Psoas muscle (tissue), 8 donors: ENCODE measurements at regions of chr5 and their contacts with region 1.

Region 1: GRCh38 chr5:53481887-53482716 is 1.7 kb downstream of the FST start:
- DNase-seq: peak; percentile 85 to 88
- ATAC-seq: peak; percentile 77 to 87 (median 82)
- H3K4me3 ChIP-seq: peak overlapping the region; percentile 71
- H3K27ac ChIP-seq: no peak overlapping the region
- H3K4me1 ChIP-seq: no peaks in the 10 kb centered on the region
- H3K27me3 ChIP-seq: peaks cover 0 to 18% (median 4%) of the 10 kb centered on the region in 3 donors
- CTCF ChIP-seq: peak; percentile 43

Region 2: GRCh38 chr5:53041071-53041692 is 440.9 kb before region 1 on chr5:
- intact Hi-C with region 1: no loop called
- DNase-seq: no peak
- ATAC-seq: no peak
- H3K4me3 ChIP-seq: no peak overlapping the region
- H3K27ac ChIP-seq: no peak overlapping the region
- H3K4me1 ChIP-seq: no peaks in the 10 kb centered on the region
- H3K27me3 ChIP-seq: no peaks in the 10 kb centered on the region
- CTCF ChIP-seq: no peak

Region 3: GRCh38 chr5:53469946-53470687 is 12.0 kb before region 1 on chr5:
- intact Hi-C with region 1: no loop called
- DNase-seq: no peak
- ATAC-seq: no peak
- H3K4me3 ChIP-seq: no peak overlapping the region
- H3K27ac ChIP-seq: no peak overlapping the region
- H3K4me1 ChIP-seq: no peaks in the 10 kb centered on the region
- H3K27me3 ChIP-seq: no peaks in the 10 kb centered on the region
- CTCF ChIP-seq: no peak

Region 4: GRCh38 chr5:53503562-53504218 is 21.6 kb after region 1 on chr5:
- intact Hi-C with region 1: no loop called
- DNase-seq: no peak
- ATAC-seq: peak in 1 of 4 donors; percentile 19
- H3K4me3 ChIP-seq: no peak overlapping the region
- H3K27ac ChIP-seq: no peak overlapping the region
- H3K4me1 ChIP-seq: no peaks in the 10 kb centered on the region
- H3K27me3 ChIP-seq: no peaks in the 10 kb centered on the region
- CTCF ChIP-seq: no peak

Region 5: DNA sequence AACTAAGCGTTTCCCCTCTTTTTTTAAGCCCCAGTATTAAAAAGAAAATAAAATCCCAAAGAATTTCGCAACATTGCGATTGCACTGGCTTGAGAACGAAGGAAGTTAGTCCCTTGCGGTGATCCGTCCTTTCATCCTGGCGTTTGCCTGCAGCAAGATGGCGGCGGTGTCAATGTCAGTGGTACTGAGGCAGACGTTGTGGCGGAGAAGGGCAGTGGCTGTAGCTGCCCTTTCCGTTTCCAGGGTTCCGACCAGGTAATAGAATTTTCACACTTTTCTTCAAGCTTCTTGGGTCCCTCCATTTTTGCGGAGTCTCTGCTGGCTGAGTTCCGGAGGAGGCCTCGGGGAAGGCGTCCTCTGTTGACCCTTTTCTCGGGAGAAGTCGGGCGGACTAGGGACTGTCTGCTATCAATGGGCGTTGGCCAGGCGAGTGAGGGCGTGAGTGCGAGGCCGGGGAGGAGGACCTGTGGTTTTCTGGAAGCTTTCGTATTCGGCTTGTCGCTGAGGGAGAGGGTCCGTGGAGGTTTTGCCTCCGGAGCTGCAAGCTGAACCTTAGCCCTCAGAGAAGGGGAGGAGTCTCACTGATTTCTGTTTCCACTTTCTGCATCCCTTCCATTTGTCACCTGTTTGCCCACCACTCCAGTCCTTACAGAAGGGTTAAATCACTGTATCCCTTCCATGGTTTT is 78.5 kb after region 1 on chr5 and contains the start of gene NDUFS4:
- intact Hi-C with region 1: loop called in 1 of 2 experiments (anchors 5 kb)
- DNase-seq: peak; percentile 86 to 90
- ATAC-seq: peak; percentile 93 to 99 (median 97)
- H3K4me3 ChIP-seq: peak within 1 kb of the TSS; percentile 79
- H3K27ac ChIP-seq: peak within 1 kb of the TSS; percentile 81
- H3K4me1 ChIP-seq: peaks cover 30% of the 10 kb centered on the region
- H3K27me3 ChIP-seq: no peaks in the 10 kb centered on the region
- CTCF ChIP-seq: no peak
- total RNA-seq, gene NDUFS4: 103 to 202 (median 153) TPM

Region 6: GRCh38 chr5:53678981-53679645 is 197.0 kb after region 1 on chr5:
- intact Hi-C with region 1: loop called in 1 of 2 experiments (anchors 10 kb)
- DNase-seq: no peak
- ATAC-seq: no peak
- H3K4me3 ChIP-seq: no peak overlapping the region
- H3K27ac ChIP-seq: no peak overlapping the region
- H3K4me1 ChIP-seq: no peaks in the 10 kb centered on the region
- H3K27me3 ChIP-seq: no peaks in the 10 kb centered on the region
- CTCF ChIP-seq: no peak

Region 7: DNA sequence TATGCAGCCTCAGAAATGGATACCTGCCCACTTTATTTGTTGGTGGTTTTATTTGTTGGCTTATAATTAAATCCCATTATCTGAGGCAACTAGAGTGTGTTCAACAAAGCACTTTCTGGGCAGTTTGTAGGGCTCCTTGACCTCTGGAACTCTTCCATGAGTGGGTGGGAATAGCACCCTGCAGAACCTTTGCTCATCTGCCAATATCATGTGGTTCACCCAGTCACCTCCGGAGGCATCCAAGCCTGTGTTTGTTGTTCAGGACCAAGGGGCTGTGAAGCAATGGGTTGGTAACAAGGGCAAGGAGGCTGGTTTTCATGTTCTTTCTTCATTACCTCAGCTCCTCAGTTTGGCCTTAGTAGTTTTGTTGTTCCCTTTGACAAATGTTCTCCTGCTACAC is 392.3 kb after region 1 on chr5:
- intact Hi-C with region 1: loop called (anchors 2 to 10 kb)
- DNase-seq: no peak
- ATAC-seq: no peak
- H3K4me3 ChIP-seq: no peak overlapping the region
- H3K27ac ChIP-seq: no peak overlapping the region
- H3K4me1 ChIP-seq: no peaks in the 10 kb centered on the region
- H3K27me3 ChIP-seq: no peaks in the 10 kb centered on the region
- CTCF ChIP-seq: no peak

Region 8: GRCh38 chr5:53991942-53992341 is 509.8 kb after region 1 on chr5:
- intact Hi-C with region 1: loop called (anchors 5 kb)
- DNase-seq: no peak
- ATAC-seq: no peak
- H3K4me3 ChIP-seq: no peak overlapping the region
- H3K27ac ChIP-seq: no peak overlapping the region
- H3K4me1 ChIP-seq: no peaks in the 10 kb centered on the region
- H3K27me3 ChIP-seq: no peaks in the 10 kb centered on the region
- CTCF ChIP-seq: peak; percentile 46

Region 9: GRCh38 chr5:54217826-54218503 is 735.9 kb after region 1 on chr5:
- intact Hi-C with region 1: loop called (anchors 5 kb)
- DNase-seq: no peak
- ATAC-seq: peak; percentile 62 to 85 (median 78)
- H3K4me3 ChIP-seq: no peak overlapping the region
- H3K27ac ChIP-seq: no peak overlapping the region
- H3K4me1 ChIP-seq: no peaks in the 10 kb centered on the region
- H3K27me3 ChIP-seq: no peaks in the 10 kb centered on the region
- CTCF ChIP-seq: peak; percentile 82

Region 10: GRCh38 chr5:54457094-54457862 is 975.2 kb after region 1 on chr5:
- intact Hi-C with region 1: loop called in 1 of 2 experiments (anchors 10 kb)
- DNase-seq: peak in 1 of 2 donors; percentile 63
- ATAC-seq: peak; percentile 75 to 79 (median 78)
- H3K4me3 ChIP-seq: peak overlapping the region; percentile 73
- H3K27ac ChIP-seq: peak overlapping the region; percentile 82
- H3K4me1 ChIP-seq: peaks cover 21% of the 10 kb centered on the region
- H3K27me3 ChIP-seq: no peaks in the 10 kb centered on the region
- CTCF ChIP-seq: no peak